ENCODE measurements at regions of chr1 and their contacts with region 1.

Region 1: DNA sequence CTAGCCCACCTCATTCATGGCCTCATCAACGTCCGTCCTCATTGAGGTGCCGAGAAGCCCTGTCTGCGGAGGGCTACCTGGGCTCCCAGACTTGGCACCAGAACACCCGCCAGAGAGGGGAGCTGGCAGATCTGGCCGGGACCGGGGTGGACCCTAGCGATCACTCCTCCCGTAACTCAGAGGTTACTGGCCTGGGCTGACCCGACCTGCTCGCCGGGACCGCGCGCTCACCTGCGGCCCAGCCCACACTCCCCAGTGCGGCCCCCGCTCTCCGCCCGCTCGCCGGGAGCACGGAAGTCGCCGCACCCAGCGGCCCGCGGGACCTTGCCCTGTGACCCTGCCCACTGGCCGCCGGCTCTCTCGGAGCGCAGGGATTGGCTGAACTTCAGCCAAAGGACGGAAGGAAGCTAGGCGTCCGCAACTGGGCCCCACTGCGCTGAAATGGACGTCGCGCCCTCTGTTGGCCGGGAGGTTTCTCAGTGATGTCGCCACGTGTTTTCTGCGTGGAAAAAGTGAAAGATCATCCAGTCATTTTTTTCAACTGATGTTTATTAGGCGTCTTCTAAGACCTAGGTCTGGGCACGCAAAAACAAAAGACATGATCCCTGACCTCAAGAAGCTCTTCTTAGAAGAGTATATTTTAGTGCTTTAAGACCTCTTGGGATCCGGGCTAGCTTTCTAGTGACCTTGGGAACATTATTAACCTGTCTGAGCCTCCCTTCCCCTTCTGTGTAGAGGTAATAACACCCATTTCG is at the start of gene SMIM12:
- DNase-seq: peak; percentile 78
- H3K4me3 ChIP-seq: peak within 1 kb of the TSS; percentile 96
- H3K27ac ChIP-seq: peak within 1 kb of the TSS; percentile 47
- H3K27me3 ChIP-seq: peaks cover 6% of the 10 kb centered on the region
- CTCF ChIP-seq: peak; percentile 88
- polyA plus RNA-seq, gene SMIM12: 41.7 and 46.1 TPM in 2 replicates

Region 2: DNA sequence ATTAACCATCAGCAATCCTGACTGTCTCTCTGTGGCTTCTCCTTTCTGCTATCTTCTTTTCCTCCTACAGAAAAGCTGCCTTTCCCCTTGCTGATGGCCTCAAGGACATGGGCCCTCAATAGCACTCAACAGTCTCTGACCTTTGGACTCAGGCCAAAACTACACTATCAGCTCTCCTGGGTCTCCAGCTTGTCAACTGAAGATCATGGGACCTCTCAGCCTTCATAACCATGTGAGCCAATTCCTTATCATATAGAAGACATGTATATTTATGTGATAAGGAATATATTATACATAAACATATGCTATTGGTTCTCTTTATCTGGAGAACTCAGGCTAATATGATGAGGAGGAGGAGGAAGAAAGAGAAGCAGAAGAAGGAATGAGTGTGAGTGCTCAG is 196.6 kb before region 1 on chr1:
- CTCF ChIA-PET with region 1: no interaction called
- POLR2A ChIA-PET with region 1: no interaction called
- DNase-seq: no peak
- H3K4me3 ChIP-seq: no peak overlapping the region
- H3K27ac ChIP-seq: no peak overlapping the region
- H3K27me3 ChIP-seq: no peaks in the 10 kb centered on the region
- CTCF ChIP-seq: no peak

Region 3: DNA sequence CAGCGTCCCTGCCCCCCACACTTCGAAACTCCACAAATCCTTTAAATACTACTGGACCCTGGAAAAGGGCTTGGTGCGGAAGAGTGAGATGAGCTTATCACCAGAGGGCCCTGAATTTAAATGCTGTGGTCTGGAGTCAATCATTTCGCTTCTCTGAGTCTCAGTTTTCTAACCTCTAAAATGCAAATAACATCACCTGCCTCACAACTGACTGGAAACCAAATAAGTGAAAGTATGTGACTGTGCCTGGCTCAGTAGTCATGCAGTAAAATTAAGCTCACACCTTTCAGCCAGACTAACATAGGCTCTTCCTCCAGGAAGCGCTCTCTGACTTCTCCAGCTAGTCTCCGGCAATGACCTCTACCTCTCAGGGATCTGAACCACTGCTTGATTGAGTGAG is 62.6 kb before region 1 on chr1:
- CTCF ChIA-PET with region 1: no interaction called
- POLR2A ChIA-PET with region 1: no interaction called
- DNase-seq: no peak
- H3K4me3 ChIP-seq: no peak overlapping the region
- H3K27ac ChIP-seq: no peak overlapping the region
- H3K27me3 ChIP-seq: peaks cover 11% of the 10 kb centered on the region
- CTCF ChIP-seq: no peak

Region 4: DNA sequence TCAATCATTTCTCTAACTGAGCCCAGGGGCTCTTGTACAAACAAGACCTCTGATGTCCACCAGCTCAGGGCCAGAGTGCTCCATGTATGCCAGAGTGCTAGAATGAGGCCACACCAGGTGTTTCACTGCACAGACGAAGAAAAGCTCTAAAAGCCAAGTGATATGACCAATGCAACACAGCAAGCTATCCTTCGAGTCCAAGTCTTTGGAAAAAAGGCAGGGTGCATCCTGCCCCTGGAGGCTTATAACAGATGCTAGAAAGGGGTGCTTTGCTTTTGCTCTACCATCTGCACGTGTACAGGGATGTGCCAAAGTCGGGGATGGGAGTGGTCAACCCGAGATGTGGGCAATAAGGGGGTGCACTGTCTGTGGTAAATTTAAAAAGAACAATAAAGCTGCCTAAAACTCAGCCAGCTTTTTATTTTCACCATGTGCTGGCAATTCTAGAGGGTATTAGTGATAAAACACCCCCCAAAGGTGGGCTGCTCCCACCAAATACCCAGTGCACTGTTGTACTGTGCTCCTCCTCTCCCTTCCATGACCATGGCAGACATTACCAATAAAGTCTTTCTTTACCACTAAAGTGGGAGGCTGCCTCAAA is 32.2 kb before region 1 on chr1:
- CTCF ChIA-PET with region 1: no interaction called
- POLR2A ChIA-PET with region 1: no interaction called
- DNase-seq: no peak
- H3K4me3 ChIP-seq: no peak overlapping the region
- H3K27ac ChIP-seq: no peak overlapping the region
- H3K27me3 ChIP-seq: no peaks in the 10 kb centered on the region
- CTCF ChIP-seq: no peak

Region 5: GRCh38 chr1:35192853-35193664 is 333.4 kb after region 1 on chr1 and contains the start of gene SFPQ:
- CTCF ChIA-PET with region 1: no interaction called
- POLR2A ChIA-PET with region 1: interaction called, 10 read pairs
- DNase-seq: peak; percentile 99
- H3K4me3 ChIP-seq: peak within 1 kb of the TSS; percentile 97
- H3K27ac ChIP-seq: peak within 1 kb of the TSS; percentile 95
- H3K27me3 ChIP-seq: no peaks in the 10 kb centered on the region
- CTCF ChIP-seq: no peak
- polyA plus RNA-seq, gene SFPQ: 107 and 126 TPM in 2 replicates

Measured in AG04450 (cell line).